Activated CD4-positive, alpha-beta T cell treated with anti-CD3 and anti-CD28 coated beads, Interleukin-2, amount 10 ng/mL, durations not matched to agents 24 days and 14 days (primary cell): ENCODE measurements at regions of chr19 and their contacts with region 1.

Region 1: GRCh38 chr19:58182989-58183816 is at the start of gene ZNF274:
- DNase-seq: peak; percentile 98
- H3K4me3 Mint-ChIP-seq: peak within 1 kb of the TSS; percentile 97
- H3K27ac Mint-ChIP-seq: peak within 1 kb of the TSS; percentile 96
- H3K4me1 Mint-ChIP-seq: peaks cover 13% of the 10 kb centered on the region
- H3K27me3 Mint-ChIP-seq: no peaks in the 10 kb centered on the region
- total RNA-seq, gene ZNF274: 19.4 and 19.8 TPM in 2 replicates

Region 2: GRCh38 chr19:58203814-58204475 is 20.7 kb after region 1 on chr19:
- intact Hi-C with region 1: no loop called
- DNase-seq: no peak
- H3K4me3 Mint-ChIP-seq: no peak overlapping the region
- H3K27ac Mint-ChIP-seq: no peak overlapping the region
- H3K4me1 Mint-ChIP-seq: no peaks in the 10 kb centered on the region
- H3K27me3 Mint-ChIP-seq: no peaks in the 10 kb centered on the region

Region 3: GRCh38 chr19:58228585-58229254 is 45.5 kb after region 1 on chr19 and contains the start of gene ZNF544:
- intact Hi-C with region 1: loop called (anchors 1 kb)
- DNase-seq: peak; percentile 89
- H3K4me3 Mint-ChIP-seq: peak within 1 kb of the TSS; percentile 95
- H3K27ac Mint-ChIP-seq: peak within 1 kb of the TSS; percentile 95
- H3K4me1 Mint-ChIP-seq: peaks cover 26% of the 10 kb centered on the region
- H3K27me3 Mint-ChIP-seq: no peaks in the 10 kb centered on the region
- total RNA-seq, gene ZNF544: 52.9 and 55.5 TPM in 2 replicates